ENCODE measurements at regions of chr1 and their contacts with region 1.

Region 1: GRCh38 chr1:154304664-154305337 is 16.1 kb upstream of the AQP10 start:
- DNase-seq: no peak
- ATAC-seq: no peak
- H3K4me3 ChIP-seq: no peak overlapping the region
- H3K4me3 Mint-ChIP-seq: no peak overlapping the region
- H3K27ac ChIP-seq: no peak overlapping the region
- H3K27ac Mint-ChIP-seq: no peak overlapping the region
- H3K4me1 ChIP-seq: no peaks in the 10 kb centered on the region
- H3K4me1 Mint-ChIP-seq: no peaks in the 10 kb centered on the region
- H3K27me3 ChIP-seq: no peaks in the 10 kb centered on the region
- H3K27me3 Mint-ChIP-seq: no peaks in the 10 kb centered on the region
- CTCF ChIP-seq: no peak

Region 2: DNA sequence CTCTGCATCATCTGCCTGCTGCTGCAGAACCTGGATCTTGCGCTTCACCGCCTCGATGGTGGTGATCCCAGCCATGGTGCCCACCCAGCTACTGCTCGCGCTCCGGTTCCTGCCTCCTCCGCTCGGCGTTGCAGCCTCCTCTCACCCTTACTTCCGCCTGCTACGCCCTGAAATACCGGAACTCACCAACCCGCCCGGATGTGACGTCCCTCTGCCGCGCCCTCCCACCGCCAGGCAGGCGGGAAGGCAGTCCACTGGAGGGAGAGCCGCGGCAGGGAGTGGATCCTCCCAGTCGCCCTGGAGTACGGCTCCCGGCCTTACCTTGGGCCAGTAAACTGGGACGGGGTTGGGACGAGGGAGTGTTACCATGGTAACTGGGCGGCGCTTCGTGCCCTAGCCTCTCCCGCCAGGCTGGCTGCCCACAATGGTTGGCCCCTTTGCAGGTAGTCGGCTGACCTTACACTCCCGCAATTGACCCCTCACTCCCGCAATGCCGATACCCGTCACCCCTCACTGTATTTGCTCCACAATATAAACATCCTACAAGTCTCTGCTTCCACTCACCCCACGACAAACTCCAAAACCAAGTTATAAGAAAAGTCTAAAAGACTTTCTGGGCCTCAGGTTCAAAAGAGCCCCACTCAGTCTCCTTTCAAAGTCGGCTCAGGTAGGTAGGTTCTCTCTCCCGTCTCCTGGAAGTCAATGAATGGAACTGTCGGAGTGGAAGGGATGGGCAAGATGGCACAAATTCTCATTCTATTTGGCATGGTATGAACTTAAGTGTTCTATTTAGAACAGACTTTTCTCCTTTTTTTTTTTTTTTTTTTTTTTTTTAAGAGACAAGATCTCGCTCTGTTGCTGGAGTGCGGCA is 121.5 kb before region 1 on chr1:
- CTCF ChIA-PET with region 1: no interaction called
- POLR2A ChIA-PET with region 1: no interaction called
- intact Hi-C with region 1: no loop called
- DNase-seq: peak; percentile 85 to 96 (median 92)
- ATAC-seq: peak; percentile 78
- H3K4me3 ChIP-seq: peak overlapping the region; percentile 88
- H3K4me3 Mint-ChIP-seq: peak overlapping the region; percentile 97
- H3K27ac ChIP-seq: peak overlapping the region; percentile 90 to 93
- H3K27ac Mint-ChIP-seq: peak overlapping the region; percentile 96
- H3K4me1 ChIP-seq: peaks cover 46% of the 10 kb centered on the region
- H3K4me1 Mint-ChIP-seq: peaks cover 54% of the 10 kb centered on the region
- H3K27me3 ChIP-seq: no peaks in the 10 kb centered on the region
- H3K27me3 Mint-ChIP-seq: peaks cover 5% of the 10 kb centered on the region
- CTCF ChIP-seq: no peak

Region 3: GRCh38 chr1:154288661-154289060 is 16.1 kb before region 1 on chr1:
- CTCF ChIA-PET with region 1: no interaction called
- POLR2A ChIA-PET with region 1: no interaction called
- intact Hi-C with region 1: loop called in 1 of 2 experiments (anchors 2 kb)
- DNase-seq: no peak
- ATAC-seq: no peak
- H3K4me3 ChIP-seq: no peak overlapping the region
- H3K4me3 Mint-ChIP-seq: no peak overlapping the region
- H3K27ac ChIP-seq: no peak overlapping the region
- H3K27ac Mint-ChIP-seq: no peak overlapping the region
- H3K4me1 ChIP-seq: no peaks in the 10 kb centered on the region
- H3K4me1 Mint-ChIP-seq: no peaks in the 10 kb centered on the region
- H3K27me3 ChIP-seq: no peaks in the 10 kb centered on the region
- H3K27me3 Mint-ChIP-seq: no peaks in the 10 kb centered on the region
- CTCF ChIP-seq: no peak